Activated CD4-positive, alpha-beta memory T cell treated with anti-CD3 and anti-CD28 coated beads, Interleukin-2, amount 10 ng/mL, durations not matched to agents 7 days and 5 days (primary cell): ENCODE measurements at regions of chr9 and their contacts with region 1.

Region 1: DNA sequence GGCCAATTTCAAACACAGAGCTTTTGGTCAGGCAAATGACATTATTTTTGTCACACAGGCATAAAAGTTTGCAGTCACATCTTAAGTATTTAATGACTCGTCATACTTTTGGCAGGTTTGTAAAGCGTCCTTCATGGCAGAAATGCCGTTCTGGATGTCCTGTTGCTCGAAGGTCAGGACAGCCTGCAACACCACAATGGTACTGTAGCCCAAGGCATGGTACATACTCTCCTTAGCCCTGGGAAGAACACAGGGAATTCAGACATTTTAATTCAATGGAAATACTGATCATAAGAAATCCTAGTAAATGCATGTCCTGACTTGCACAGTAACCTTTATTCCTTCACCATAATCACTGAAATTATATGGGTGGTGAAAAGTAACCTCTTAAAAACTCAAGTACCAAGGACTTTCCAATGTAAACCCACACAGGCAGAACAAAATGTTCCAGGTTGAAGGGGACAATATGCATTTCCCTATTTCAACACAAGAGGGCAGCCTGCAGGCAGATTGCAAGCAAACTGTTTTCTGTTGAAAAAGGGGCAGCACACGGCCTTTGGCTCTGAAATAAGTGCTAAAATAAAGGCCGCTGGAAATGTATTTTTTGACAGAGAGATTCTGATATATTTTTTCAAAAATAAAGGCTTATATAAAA is 95.7 kb downstream of the TTC39B start:
- DNase-seq: peak; percentile 49
- H3K4me3 Mint-ChIP-seq: no peak overlapping the region
- H3K27ac Mint-ChIP-seq: no peak overlapping the region
- H3K4me1 Mint-ChIP-seq: no peaks in the 10 kb centered on the region
- H3K27me3 Mint-ChIP-seq: no peaks in the 10 kb centered on the region

Region 2: DNA sequence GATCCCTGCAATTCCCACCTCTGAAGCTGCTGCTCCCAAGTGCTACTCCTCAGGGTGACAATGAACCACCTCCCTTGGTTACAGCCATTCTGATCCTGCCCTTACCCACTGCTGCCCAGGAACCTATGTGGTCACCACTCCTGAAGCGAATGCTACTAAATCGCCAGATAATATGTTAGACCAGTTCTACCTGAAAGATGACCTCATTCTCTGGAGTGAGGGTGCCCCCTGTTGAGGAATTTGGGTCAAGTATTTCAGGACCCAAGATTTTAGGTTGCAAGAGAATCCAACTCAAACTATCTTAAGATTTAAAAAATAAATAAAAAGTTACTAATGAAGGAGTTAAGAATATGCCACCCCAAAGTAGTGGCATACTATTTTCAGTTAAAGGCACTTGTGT is 205.6 kb after region 1 on chr9:
- CTCF ChIA-PET with region 1: interaction called, 10 read pairs
- POLR2A ChIA-PET with region 1: no interaction called
- DNase-seq: peak; percentile 51
- H3K4me3 Mint-ChIP-seq: no peak overlapping the region
- H3K27ac Mint-ChIP-seq: no peak overlapping the region
- H3K4me1 Mint-ChIP-seq: peaks cover 3% of the 10 kb centered on the region
- H3K27me3 Mint-ChIP-seq: peaks cover 10% of the 10 kb centered on the region

Region 3: DNA sequence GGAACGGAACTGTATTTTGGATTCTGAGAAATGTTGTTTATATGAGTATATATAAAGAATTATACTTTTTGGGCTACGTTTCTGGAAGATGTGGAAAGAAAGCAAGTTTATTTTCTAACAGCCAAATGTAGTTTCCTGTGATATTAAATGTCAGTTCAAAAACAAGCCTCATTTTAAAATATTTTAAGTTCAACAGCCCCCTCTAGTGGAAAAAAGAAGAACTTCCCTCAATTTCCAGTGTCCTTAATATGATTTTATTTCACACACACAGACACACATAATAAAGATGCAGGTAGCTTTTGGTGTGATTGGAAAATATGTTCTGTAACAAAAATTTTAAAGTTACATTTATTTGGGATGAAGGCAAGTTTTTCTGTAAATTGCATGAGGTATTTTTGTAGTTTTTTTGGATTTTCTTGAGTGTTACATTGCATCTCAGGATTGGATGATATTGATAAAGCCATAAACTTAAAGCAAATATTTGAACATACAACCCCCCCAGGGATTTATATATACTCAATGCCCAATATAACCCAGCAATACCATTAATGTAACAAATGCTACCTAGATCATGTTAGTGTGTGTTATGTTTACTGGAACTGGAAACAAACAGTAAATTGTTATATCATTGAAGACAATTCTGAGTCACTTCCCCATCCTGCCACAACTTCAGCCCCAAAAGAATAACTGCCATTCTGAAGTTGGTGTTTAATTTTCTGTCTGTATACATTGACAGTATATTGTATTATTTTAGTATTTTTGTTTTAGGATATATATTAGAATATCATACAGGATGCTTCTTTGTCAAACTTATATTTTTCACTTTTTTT is 395.6 kb after region 1 on chr9:
- CTCF ChIA-PET with region 1: interaction called, 10 read pairs
- POLR2A ChIA-PET with region 1: no interaction called
- DNase-seq: no peak
- H3K4me3 Mint-ChIP-seq: no peak overlapping the region
- H3K27ac Mint-ChIP-seq: peak overlapping the region; percentile 40
- H3K4me1 Mint-ChIP-seq: peaks cover 20% of the 10 kb centered on the region
- H3K27me3 Mint-ChIP-seq: no peaks in the 10 kb centered on the region